PC-9 (cell line): ENCODE measurements at regions of chr2 and their contacts with region 1.

Region 1: DNA sequence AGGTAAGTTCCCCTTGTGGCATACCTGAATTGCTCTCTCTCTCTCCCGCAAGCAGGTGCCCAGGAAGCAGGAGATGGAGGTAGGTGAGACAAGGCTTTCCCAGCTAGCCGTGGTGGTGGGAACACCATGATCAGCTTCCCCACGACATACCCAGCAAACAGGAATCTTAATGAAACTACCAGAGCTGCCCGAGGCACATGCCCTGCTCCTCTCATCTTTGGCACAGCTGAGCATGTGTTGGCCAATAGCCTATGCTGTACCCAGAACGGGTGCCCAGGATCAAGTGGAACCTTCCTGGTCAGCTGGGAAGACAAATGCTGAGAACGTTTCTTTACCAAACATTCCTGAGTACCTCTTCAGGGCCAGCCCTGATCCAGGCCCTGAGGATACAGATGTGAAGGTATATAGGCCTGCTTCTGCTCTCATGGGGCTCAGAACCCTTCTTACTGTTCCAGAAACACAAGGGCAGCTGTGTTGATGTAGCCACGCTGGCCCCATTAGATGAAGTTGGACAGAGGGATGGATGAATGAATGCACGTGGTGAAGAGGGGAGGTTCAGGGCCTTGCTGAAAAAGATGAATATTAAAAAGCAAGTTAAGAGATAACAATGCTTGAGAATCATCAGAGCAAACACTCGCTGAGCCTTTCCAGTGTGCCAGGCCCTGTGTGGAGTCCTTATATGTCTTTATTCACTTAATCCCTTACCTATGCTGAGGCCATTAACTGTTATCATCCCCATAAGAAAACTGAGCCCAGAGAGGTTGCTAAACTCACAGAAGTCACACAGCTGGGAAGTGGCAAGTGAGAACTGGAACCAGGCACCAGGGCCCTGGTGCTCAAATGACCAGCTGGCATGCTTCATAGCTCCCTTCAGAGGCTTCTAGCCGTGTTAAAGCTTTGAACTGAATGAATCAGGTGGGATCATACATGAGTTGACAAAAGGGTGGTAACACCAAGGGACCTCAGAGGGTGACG is 68.8 kb upstream of the TMEM247 start:
- DNase-seq: peak in 1 of 2 experiments; percentile 73
- H3K4me3 ChIP-seq: peak overlapping the region; percentile 28; the same call in 1 of the 2 replicates
- H3K27ac ChIP-seq: peak overlapping the region; percentile 98
- H3K4me1 ChIP-seq: peaks cover 88% of the 10 kb centered on the region
- H3K27me3 ChIP-seq: no peaks in the 10 kb centered on the region
- CTCF ChIP-seq: no peak

Region 2: DNA sequence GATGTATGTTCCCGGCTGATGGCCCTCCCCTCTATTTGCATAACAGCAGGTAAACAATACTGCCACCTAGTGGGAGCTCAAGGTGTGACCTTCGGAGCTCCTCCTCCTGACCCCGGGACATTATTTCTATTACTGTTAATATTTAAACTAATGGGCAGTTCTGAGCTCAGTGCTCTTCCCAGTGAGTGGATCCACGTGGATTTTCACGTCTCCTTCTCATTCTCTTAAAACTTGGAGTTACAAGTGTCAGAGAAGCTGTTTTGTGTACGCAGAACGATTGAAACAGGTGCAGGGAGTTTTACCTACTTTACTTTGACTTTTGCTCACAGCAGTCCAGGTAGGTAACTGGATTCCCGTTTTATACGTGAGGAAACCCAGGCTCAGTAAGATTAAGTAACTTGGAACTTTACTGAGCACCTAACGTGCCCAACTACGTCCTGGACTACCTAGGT is 631.8 kb before region 1 on chr2:
- CTCF ChIA-PET with region 1: no interaction called
- POLR2A ChIA-PET with region 1: interaction called, 33 read pairs
- intact Hi-C with region 1: no loop called
- DNase-seq: peak; percentile 67 to 68
- H3K4me3 ChIP-seq: no peak overlapping the region
- H3K27ac ChIP-seq: no peak overlapping the region
- H3K4me1 ChIP-seq: no peaks in the 10 kb centered on the region
- H3K27me3 ChIP-seq: no peaks in the 10 kb centered on the region
- CTCF ChIP-seq: peak; percentile 97

Region 3: GRCh38 chr2:46067851-46068305 is 342.7 kb before region 1 on chr2:
- CTCF ChIA-PET with region 1: no interaction called
- POLR2A ChIA-PET with region 1: interaction called, 4 read pairs
- intact Hi-C with region 1: loop called (anchors 1 kb)
- DNase-seq: peak; percentile 60 to 98
- H3K4me3 ChIP-seq: peak overlapping the region; percentile 27
- H3K27ac ChIP-seq: peak overlapping the region; percentile 89
- H3K4me1 ChIP-seq: peaks cover 80% of the 10 kb centered on the region
- H3K27me3 ChIP-seq: no peaks in the 10 kb centered on the region
- CTCF ChIP-seq: no peak

Region 4: GRCh38 chr2:46236005-46236875 is 174.3 kb before region 1 on chr2:
- CTCF ChIA-PET with region 1: no interaction called
- POLR2A ChIA-PET with region 1: interaction called, 10 read pairs
- intact Hi-C with region 1: no loop called
- DNase-seq: no peak
- H3K4me3 ChIP-seq: no peak overlapping the region
- H3K27ac ChIP-seq: no peak overlapping the region
- H3K4me1 ChIP-seq: peaks cover 8% of the 10 kb centered on the region
- H3K27me3 ChIP-seq: no peaks in the 10 kb centered on the region
- CTCF ChIP-seq: no peak

Region 5: DNA sequence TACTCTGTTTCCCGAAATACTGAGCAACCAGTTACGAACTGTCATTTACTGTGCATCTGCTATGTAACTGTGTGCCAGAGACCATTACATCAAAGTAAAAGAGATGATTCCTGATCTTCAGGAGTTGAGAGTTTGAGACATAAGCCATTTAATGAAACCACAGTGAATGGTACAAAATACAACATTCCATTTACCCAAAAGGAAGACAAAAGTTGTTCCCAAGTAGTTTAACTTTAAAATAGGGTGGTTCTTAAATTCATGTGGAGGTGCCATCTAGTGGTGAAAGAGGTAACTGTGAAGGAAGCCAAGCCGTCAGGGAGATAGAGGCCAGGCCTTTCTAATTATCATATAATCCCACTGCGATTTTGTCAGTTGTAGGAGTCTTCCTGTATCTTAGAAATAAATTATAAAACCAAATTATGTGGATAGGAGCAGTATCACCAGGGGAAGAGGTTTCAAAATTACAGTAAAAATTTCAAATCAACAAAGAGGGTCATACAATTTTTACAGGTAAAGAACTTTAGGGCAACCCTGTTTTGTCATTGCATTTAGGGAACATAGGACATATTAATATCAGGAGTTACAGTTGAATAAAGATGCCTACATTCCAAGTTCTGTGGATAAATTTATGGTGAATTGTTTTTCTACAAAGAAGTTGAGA is 45.6 kb before region 1 on chr2:
- CTCF ChIA-PET with region 1: no interaction called
- POLR2A ChIA-PET with region 1: no interaction called
- intact Hi-C with region 1: loop called (anchors 2 kb)
- DNase-seq: peak; percentile 35 to 49
- H3K4me3 ChIP-seq: no peak overlapping the region
- H3K27ac ChIP-seq: no peak overlapping the region
- H3K4me1 ChIP-seq: 0 out of 2 replicates have a peak, but pooled peaks cover 12% of the 10 kb centered on the region
- H3K27me3 ChIP-seq: no peaks in the 10 kb centered on the region
- CTCF ChIP-seq: peak; percentile 98

Region 6: DNA sequence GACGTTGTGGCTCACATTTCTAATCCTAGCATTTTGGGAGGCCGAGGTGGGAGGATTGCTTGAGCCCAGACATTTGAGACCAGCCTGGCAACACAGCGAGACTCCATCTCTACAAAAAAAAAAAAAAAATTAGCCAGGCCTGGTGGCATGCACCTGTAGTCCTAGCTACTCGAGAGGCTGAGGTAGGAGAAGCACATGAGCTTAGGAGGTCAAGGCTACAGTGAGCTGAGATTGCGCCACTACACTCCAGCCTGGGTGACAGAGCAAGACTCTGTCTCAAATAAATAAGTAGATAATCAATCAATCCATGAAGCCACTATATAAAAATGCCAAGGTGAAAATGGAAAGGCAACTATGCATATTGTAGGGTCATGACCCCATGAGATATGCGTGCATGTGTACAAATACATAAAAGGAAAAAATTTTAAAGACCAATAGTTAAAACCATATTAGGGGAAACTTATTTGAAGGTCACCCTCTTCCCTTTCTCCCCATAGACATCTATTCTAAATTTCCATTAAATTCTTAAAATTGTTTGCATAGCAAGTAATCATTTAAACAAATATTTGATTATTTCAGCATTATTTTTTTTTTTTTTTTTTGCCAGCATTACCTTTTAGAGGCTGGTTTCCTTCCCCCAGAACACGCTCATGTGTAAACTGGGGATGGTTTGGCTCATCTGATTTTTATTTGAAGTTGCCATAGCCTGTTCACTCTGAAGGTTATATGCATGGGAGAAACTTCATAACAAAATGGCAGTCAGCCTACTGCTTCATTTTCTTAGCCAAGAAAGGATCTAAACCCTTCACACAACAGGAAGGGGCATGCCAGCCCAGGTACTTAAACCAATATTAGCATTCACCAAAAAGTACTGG is 31.5 kb after region 1 on chr2:
- CTCF ChIA-PET with region 1: no interaction called
- POLR2A ChIA-PET with region 1: interaction called, 11 read pairs
- intact Hi-C with region 1: no loop called
- DNase-seq: no peak
- H3K4me3 ChIP-seq: no peak overlapping the region
- H3K27ac ChIP-seq: no peak overlapping the region
- H3K4me1 ChIP-seq: 0 out of 2 replicates have a peak, but pooled peaks cover 5% of the 10 kb centered on the region
- H3K27me3 ChIP-seq: no peaks in the 10 kb centered on the region
- CTCF ChIP-seq: no peak